ENCODE measurements at regions of chr16 and their contacts with region 1.

Region 1: GRCh38 chr16:83826146-83826913 is 18.6 kb downstream of the HSBP1 start:
- DNase-seq: peak; percentile 83
- ATAC-seq: peak; percentile 94
- H3K4me3 ChIP-seq: no peak overlapping the region
- H3K4me3 Mint-ChIP-seq: no peak overlapping the region
- H3K27ac ChIP-seq: no peak overlapping the region
- H3K27ac Mint-ChIP-seq: peak overlapping the region; percentile 55
- H3K4me1 ChIP-seq: peaks cover 0 to 11% of the 10 kb centered on the region in 2 donors
- H3K4me1 Mint-ChIP-seq: peaks cover 6% of the 10 kb centered on the region
- H3K27me3 ChIP-seq: peaks cover 0 to 2% (median 0%) of the 10 kb centered on the region in 4 experiments
- H3K27me3 Mint-ChIP-seq: peaks cover 8% of the 10 kb centered on the region
- CTCF ChIP-seq: peak; percentile 98

Region 2: GRCh38 chr16:83799336-83799735 is 27.0 kb before region 1 on chr16:
- CTCF ChIA-PET with region 1: no interaction called
- POLR2A ChIA-PET with region 1: no interaction called
- intact Hi-C with region 1: no loop called
- DNase-seq: no peak
- ATAC-seq: no peak
- H3K4me3 ChIP-seq: no peak overlapping the region
- H3K4me3 Mint-ChIP-seq: no peak overlapping the region
- H3K27ac ChIP-seq: no peak overlapping the region
- H3K27ac Mint-ChIP-seq: no peak overlapping the region
- H3K4me1 ChIP-seq: peaks cover 6 to 15% of the 10 kb centered on the region in 2 donors
- H3K4me1 Mint-ChIP-seq: peaks cover 17% of the 10 kb centered on the region
- H3K27me3 ChIP-seq: no peaks in the 10 kb centered on the region
- H3K27me3 Mint-ChIP-seq: no peaks in the 10 kb centered on the region
- CTCF ChIP-seq: no peak

Region 3: GRCh38 chr16:83878838-83879237 is 52.5 kb after region 1 on chr16:
- CTCF ChIA-PET with region 1: interaction called, 22 read pairs
- POLR2A ChIA-PET with region 1: no interaction called
- intact Hi-C with region 1: loop called (anchors 1 kb)
- DNase-seq: peak; percentile 35
- ATAC-seq: no peak
- H3K4me3 ChIP-seq: no peak overlapping the region
- H3K4me3 Mint-ChIP-seq: no peak overlapping the region
- H3K27ac ChIP-seq: no peak overlapping the region
- H3K27ac Mint-ChIP-seq: no peak overlapping the region
- H3K4me1 ChIP-seq: no peaks in the 10 kb centered on the region
- H3K4me1 Mint-ChIP-seq: no peaks in the 10 kb centered on the region
- H3K27me3 ChIP-seq: peaks cover 0 to 3% (median 0%) of the 10 kb centered on the region in 4 experiments
- H3K27me3 Mint-ChIP-seq: peaks cover 36% of the 10 kb centered on the region
- CTCF ChIP-seq: peak; percentile 52

Region 4: GRCh38 chr16:83898463-83899271 is 72.3 kb after region 1 on chr16 and contains the start of gene MLYCD:
- CTCF ChIA-PET with region 1: interaction called, 6 read pairs
- POLR2A ChIA-PET with region 1: no interaction called
- intact Hi-C with region 1: loop called (anchors 1 kb)
- DNase-seq: peak; percentile 82
- ATAC-seq: peak; percentile 96
- H3K4me3 ChIP-seq: peak within 1 kb of the TSS; percentile 60 to 79 (median 69)
- H3K4me3 Mint-ChIP-seq: peak within 1 kb of the TSS; percentile 91
- H3K27ac ChIP-seq: peak within 1 kb of the TSS; percentile 41 to 58
- H3K27ac Mint-ChIP-seq: peak within 1 kb of the TSS; percentile 72
- H3K4me1 ChIP-seq: peaks cover 19 to 20% of the 10 kb centered on the region in 2 donors
- H3K4me1 Mint-ChIP-seq: peaks cover 30% of the 10 kb centered on the region
- H3K27me3 ChIP-seq: no peaks in the 10 kb centered on the region
- H3K27me3 Mint-ChIP-seq: peaks cover 13% of the 10 kb centered on the region
- CTCF ChIP-seq: no peak
- total RNA-seq, gene MLYCD: 16.8 and 17.1 TPM in 2 replicates

Region 5: DNA sequence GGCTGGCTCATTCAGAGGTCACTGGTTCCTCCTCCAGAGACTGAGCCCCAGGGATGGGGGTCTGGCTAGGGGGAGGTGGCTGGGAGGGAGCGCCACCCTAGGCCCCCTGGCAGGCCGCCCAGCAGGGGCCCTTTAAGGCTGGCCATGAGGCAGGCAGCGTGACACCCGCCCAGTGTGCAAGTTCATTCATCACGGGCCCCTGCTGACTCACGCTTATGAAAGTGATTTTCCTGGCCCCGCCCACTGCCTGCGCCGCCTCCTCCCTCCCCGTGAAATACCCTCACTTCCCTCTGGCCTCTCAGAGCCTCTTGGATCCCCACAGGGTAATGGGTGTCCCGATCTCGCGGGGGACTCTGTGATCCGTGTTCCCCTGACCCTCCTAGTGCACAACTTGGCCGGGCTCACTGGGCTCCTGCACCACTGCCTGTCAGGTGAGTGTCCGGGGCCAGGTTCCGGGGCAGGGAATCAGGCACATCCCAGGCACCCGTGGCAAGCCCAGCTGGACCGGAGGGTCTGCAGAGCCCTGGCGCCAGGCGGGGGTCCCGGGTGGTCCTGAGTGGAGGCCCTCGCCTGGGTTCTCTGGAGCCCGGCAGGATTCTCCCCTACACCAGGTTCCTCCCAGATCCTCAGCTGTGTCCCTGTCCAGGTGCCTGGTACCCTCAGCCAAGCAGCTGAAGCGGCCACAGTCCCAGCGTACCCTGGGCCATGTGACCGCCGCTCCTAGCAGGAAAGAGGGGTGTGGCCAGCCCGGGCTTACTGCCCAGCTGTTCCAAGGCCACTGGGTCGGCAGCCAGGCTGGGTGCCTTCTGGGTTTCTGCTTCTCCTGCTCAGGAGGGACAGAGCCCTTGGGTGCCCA is 126.8 kb after region 1 on chr16 and contains the start of gene OSGIN1:
- CTCF ChIA-PET with region 1: interaction called, 5 read pairs
- POLR2A ChIA-PET with region 1: no interaction called
- intact Hi-C with region 1: loop called (anchors 1 kb)
- DNase-seq: peak; percentile 52
- ATAC-seq: peak; percentile 81
- H3K4me3 ChIP-seq: peak within 1 kb of the TSS in 2 of 5 experiments; percentile 19 to 35
- H3K4me3 Mint-ChIP-seq: peak within 1 kb of the TSS; percentile 76
- H3K27ac ChIP-seq: no peak within 1 kb of the TSS
- H3K27ac Mint-ChIP-seq: no peak within 1 kb of the TSS
- H3K4me1 ChIP-seq: peaks cover 12 to 13% of the 10 kb centered on the region in 2 donors
- H3K4me1 Mint-ChIP-seq: peaks cover 12% of the 10 kb centered on the region
- H3K27me3 ChIP-seq: peaks cover 0 to 44% (median 10%) of the 10 kb centered on the region in 4 experiments
- H3K27me3 Mint-ChIP-seq: peaks cover 17% of the 10 kb centered on the region
- CTCF ChIP-seq: no peak
- total RNA-seq, gene OSGIN1: 1.2 and 1.8 TPM in 2 replicates